ENCODE measurements at regions of chr20 and their contacts with region 1.

Region 1: GRCh38 chr20:34389206-34389953 is 26.3 kb downstream of the ITCH start:
- DNase-seq: no peak
- H3K4me3 Mint-ChIP-seq: no peak overlapping the region
- H3K27ac Mint-ChIP-seq: no peak overlapping the region
- H3K4me1 Mint-ChIP-seq: peaks cover 21% of the 10 kb centered on the region
- H3K27me3 Mint-ChIP-seq: no peaks in the 10 kb centered on the region

Region 2: GRCh38 chr20:34473262-34473883 is 84.0 kb after region 1 on chr20:
- intact Hi-C with region 1: loop called (anchors 10 kb)
- DNase-seq: peak; percentile 76
- H3K4me3 Mint-ChIP-seq: no peak overlapping the region
- H3K27ac Mint-ChIP-seq: no peak overlapping the region
- H3K4me1 Mint-ChIP-seq: peaks cover 8% of the 10 kb centered on the region
- H3K27me3 Mint-ChIP-seq: no peaks in the 10 kb centered on the region